Mammary epithelial cell (primary cell): ENCODE measurements at regions of chr1 and their contacts with region 1.

Region 1: DNA sequence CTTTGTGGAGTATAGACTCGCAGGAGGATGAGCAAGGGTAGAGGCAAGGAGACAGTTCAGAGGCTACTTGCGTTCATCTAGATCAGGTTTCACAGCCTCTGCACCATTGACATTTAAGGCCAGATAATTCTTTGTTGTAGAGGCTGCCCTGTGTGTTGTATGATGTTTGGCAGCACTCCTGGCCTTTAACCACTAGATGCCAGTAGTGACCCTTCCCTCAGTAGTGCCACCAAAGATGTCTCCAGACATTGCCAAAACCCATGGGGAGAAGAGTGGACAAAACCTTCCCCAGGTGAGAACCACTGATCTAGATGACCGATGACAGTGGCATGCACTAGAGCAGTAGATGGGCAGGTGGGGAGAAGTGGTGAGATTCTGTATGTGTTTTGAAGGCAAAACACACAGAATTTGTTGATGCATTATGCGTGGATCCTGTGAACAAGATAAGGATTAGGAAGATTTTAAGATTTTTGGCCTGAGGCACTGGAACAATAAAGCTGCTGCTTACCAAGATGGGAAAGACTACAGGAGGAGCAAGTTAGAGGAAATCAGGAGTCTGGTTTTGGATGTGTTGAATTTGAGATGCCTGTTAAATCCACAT is 9.9 kb upstream of the COG2 start:
- DNase-seq: peak; percentile 39
- H3K4me3 ChIP-seq: no peak overlapping the region
- H3K27ac ChIP-seq: no peak overlapping the region
- H3K4me1 ChIP-seq: peaks cover 16% of the 10 kb centered on the region
- H3K27me3 ChIP-seq: no peaks in the 10 kb centered on the region
- CTCF ChIP-seq: peak; percentile 68 to 85

Region 2: DNA sequence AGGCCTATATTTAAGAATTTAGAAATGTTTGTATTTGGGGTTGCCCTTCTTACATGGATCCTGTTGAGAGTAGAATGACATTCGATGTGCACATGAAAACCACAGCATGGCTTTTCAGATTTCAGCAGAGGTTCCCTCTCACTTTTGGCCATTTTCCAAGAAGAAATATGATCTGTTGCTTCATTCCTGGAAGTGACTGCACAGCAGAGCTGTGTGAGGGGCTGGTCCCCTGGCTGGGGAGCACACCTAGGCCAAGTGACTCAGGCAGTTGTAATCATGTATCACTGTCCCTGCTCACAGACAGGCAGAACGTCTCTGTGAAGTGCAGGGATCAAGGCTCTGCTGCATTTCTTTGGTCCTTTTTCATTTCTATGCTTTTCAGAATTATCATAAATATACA is 49.2 kb after region 1 on chr1:
- CTCF ChIA-PET with region 1: no interaction called
- dilution Hi-C with region 1: no loop called
- in situ Hi-C with region 1: no loop called
- intact Hi-C with region 1: loop called (anchors 2 kb)
- DNase-seq: peak; percentile 80
- H3K4me3 ChIP-seq: no peak overlapping the region
- H3K27ac ChIP-seq: no peak overlapping the region
- H3K4me1 ChIP-seq: peaks cover 30% of the 10 kb centered on the region
- H3K27me3 ChIP-seq: no peaks in the 10 kb centered on the region
- CTCF ChIP-seq: no peak

Region 3: DNA sequence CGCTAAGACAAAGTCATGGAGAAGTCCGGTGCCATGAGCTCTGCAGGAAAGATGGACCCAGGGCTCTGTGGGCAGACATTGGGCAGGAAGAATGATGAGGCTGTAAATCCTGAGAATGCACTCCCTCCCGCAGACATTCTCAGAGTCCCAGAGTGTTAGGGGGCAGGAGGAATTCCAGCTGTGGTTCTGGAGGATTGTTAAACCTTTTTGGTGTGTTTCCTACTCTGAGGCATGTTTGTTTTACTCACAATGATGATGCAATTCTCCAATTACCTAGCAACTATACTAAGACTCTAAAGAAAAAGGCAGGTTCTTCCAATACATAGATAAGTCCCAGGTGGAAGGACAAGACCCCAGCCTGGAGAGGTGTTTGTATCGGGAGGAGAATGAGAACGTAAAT is 112.0 kb after region 1 on chr1:
- CTCF ChIA-PET with region 1: no interaction called
- dilution Hi-C with region 1: no loop called
- in situ Hi-C with region 1: no loop called
- intact Hi-C with region 1: no loop called
- DNase-seq: no peak
- H3K4me3 ChIP-seq: no peak overlapping the region
- H3K27ac ChIP-seq: no peak overlapping the region
- H3K4me1 ChIP-seq: no peaks in the 10 kb centered on the region
- H3K27me3 ChIP-seq: no peaks in the 10 kb centered on the region
- CTCF ChIP-seq: no peak

Region 4: DNA sequence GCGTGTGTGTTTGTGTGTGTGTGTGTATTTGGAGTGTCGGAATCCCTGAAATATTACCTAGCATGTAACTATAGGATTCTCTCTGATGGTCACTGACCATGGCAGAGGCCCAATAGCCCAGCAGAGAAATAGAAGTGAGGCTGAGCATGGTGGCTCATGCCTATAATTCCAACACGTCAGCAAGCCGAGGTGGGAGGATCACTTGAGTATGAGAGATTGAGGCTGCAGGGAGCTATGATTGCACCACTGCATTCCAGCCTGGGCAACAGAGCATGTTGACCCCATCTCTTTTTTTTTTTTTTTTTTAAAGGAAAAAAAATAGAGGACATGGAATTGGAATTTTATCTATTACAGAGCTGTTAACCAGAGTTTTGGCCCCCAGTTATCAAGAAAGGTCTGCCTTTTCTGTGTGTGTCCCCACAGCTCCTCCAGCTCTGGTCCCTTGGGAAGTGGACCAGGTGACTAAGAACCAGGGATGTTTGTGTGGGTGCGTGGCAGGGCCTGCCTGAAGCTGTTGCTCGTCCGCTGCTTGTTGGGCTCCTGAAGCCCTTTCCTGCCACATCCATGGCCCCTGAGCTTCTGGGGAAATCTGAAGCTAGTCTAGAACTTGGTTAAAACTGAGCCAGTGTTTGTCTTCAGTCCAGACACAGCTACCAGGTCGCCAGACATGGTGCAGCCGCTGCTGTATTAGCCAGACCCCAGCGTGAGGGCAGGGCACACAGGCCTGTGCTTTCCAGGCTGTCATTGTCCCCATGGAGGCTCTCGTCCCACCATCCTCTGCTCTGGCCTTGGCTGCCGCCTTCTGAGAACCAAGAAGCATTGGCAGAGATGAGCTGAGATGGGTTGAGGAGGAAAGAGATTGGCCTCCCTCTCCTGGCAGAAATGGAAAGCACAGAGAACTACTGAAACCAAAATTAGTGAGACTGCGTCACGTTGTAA is 140.4 kb after region 1 on chr1:
- CTCF ChIA-PET with region 1: no interaction called
- dilution Hi-C with region 1: no loop called
- in situ Hi-C with region 1: no loop called
- intact Hi-C with region 1: loop called (anchors 1 kb)
- DNase-seq: peak; percentile 25
- H3K4me3 ChIP-seq: no peak overlapping the region
- H3K27ac ChIP-seq: no peak overlapping the region
- H3K4me1 ChIP-seq: peaks cover 9% of the 10 kb centered on the region
- H3K27me3 ChIP-seq: peaks cover 3% of the 10 kb centered on the region
- CTCF ChIP-seq: peak in 1 of 2 donors; percentile 49

Region 5: DNA sequence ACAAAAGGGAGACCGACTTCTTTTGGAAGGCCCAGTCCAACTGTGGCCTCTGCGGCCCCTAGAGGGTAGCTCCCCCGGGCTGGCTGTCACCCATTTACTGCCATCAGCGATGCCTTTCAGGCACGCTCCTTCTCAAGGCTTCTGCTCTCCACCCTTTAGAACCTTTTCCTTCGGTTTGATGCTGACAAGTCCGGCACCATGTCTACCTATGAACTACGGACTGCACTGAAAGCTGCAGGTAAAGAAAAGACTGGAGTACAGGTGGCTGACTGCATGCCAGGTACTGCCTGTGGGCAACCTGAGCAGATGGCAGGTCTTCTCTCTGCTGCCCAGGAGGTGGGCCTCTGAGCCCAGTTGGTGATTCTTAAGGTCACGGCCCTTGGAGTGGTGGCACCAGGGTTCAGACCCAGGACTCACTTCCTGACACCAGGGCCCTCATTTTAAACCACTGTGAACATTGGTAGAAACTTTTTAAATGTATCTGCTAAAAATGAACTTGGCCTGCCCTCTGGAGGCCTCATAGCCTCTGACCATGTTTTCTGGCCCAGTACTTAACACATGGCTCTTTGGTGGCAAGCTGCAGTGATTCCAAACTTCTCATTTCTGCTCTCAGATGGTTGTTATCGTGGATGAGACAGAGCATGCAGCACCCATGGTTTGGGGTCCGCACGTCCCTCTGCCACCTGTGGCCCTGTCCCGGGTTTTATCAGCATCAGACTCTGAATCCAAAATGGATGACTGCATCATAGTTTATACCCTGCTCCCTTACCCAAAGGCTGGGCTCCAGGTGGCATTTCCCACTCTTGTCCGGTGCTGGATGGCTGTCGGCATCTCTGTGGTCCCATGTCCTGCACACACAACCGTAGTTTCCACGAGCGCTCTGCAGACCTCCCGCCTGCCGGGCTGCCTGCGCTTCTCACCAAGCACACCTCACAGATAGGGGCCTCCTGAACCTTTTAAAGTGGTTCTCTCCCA is 160.6 kb after region 1 on chr1:
- CTCF ChIA-PET with region 1: no interaction called
- dilution Hi-C with region 1: no loop called
- in situ Hi-C with region 1: no loop called
- intact Hi-C with region 1: loop called (anchors 1 kb)
- DNase-seq: no peak
- H3K4me3 ChIP-seq: no peak overlapping the region
- H3K27ac ChIP-seq: no peak overlapping the region
- H3K4me1 ChIP-seq: no peaks in the 10 kb centered on the region
- H3K27me3 ChIP-seq: no peaks in the 10 kb centered on the region
- CTCF ChIP-seq: peak in 1 of 2 donors; percentile 47

Region 6: GRCh38 chr1:230839173-230839572 is 206.8 kb after region 1 on chr1:
- CTCF ChIA-PET with region 1: no interaction called
- dilution Hi-C with region 1: no loop called
- in situ Hi-C with region 1: no loop called
- intact Hi-C with region 1: no loop called
- DNase-seq: no peak
- H3K4me3 ChIP-seq: no peak overlapping the region
- H3K27ac ChIP-seq: no peak overlapping the region
- H3K4me1 ChIP-seq: no peaks in the 10 kb centered on the region
- H3K27me3 ChIP-seq: no peaks in the 10 kb centered on the region
- CTCF ChIP-seq: no peak

Region 7: DNA sequence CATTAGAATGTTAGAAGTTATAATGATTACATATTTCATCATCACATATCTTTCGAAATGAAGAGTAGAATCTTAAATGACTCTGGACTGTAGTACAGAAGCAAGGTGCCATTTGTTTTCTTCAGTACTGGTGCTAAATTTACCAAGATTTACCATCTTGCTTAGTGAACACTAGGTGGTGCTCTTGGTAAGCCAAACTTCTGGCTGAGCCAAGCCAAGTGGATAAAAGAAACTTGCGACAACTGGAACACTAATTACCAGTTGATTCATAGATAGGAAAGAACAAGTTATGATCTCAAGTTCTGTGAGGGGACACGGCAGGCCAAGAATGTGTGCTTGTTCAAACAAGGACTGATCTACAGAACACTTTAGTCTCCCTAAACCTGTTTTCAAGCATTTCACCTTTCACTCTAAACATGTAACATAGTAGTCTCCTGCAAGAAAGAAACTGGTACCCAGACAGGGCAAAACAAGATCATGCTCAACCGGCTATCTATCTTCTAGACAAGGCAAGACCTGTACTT is 725.5 kb after region 1 on chr1:
- CTCF ChIA-PET with region 1: no interaction called
- dilution Hi-C with region 1: no loop called
- in situ Hi-C with region 1: no loop called
- intact Hi-C with region 1: no loop called
- DNase-seq: peak; percentile 82
- H3K4me3 ChIP-seq: no peak overlapping the region
- H3K27ac ChIP-seq: no peak overlapping the region
- H3K4me1 ChIP-seq: peaks cover 17% of the 10 kb centered on the region
- H3K27me3 ChIP-seq: no peaks in the 10 kb centered on the region
- CTCF ChIP-seq: peak; percentile 62 to 77